Left ventricle myocardium inferior (tissue), 1 donor: ENCODE measurements at regions of chr6 and their contacts with region 1.

Region 1: GRCh38 chr6:138428944-138429598 is 25.0 kb downstream of the HEBP2 start:
- DNase-seq: no peak
- H3K4me3 ChIP-seq: peak overlapping the region; percentile 47
- H3K27ac ChIP-seq: peak overlapping the region; percentile 83
- H3K4me1 ChIP-seq: peaks cover 68% of the 10 kb centered on the region
- H3K27me3 ChIP-seq: no peaks in the 10 kb centered on the region
- CTCF ChIP-seq: peak; percentile 73

Region 2: DNA sequence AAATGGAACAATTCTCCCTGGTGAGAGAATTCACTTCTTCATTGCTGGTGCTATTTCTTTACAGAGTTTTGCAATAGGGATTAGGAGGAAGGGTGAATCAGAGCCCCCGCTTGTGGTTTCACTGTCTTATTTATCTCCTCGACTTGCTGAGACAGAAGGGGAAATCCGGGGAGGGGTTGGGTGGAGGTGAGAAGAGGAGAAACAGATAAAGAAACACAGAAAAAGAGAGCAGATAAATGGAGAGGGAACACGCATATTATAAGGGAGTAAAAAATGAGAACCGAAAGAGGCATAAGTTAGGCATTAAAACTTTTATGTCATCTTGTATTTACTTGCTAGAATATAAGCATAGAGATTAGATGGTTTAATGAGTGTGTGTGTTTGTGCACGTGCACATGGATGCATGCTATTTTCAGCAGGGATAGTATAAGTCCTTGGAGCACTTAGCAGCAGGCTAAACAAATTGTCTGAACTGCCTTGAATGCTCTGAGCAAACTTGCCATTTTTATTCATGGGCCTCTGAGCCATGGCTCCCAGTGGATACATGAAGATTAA is 1039.8 kb before region 1 on chr6:
- intact Hi-C with region 1: no loop called
- DNase-seq: no peak
- H3K4me3 ChIP-seq: no peak overlapping the region
- H3K27ac ChIP-seq: no peak overlapping the region
- H3K4me1 ChIP-seq: no peaks in the 10 kb centered on the region
- H3K27me3 ChIP-seq: peaks cover 12% of the 10 kb centered on the region
- CTCF ChIP-seq: no peak

Region 3: DNA sequence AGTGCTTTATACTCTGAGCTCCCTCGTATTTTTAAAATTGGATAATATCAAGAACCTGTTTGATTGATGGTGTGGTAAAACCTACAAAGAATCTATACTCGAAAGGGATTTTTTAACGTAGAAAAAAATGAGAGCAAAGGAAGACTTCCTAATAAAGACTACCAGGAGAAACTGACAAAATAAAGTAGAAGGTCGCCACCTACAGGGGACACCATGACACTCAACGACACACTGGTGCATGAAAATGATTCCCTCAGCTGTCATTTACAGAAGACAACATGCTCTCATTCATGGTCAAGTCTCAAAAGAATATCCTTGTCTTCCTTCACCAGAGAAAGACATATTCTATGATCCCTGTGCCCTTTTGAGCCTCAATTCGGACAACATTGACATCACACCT is 80.3 kb after region 1 on chr6:
- intact Hi-C with region 1: loop called (anchors 10 kb)
- DNase-seq: peak; percentile 28
- H3K4me3 ChIP-seq: no peak overlapping the region
- H3K27ac ChIP-seq: no peak overlapping the region
- H3K4me1 ChIP-seq: peaks cover 77% of the 10 kb centered on the region
- H3K27me3 ChIP-seq: no peaks in the 10 kb centered on the region
- CTCF ChIP-seq: peak; percentile 70

Region 4: GRCh38 chr6:138588805-138589434 is 159.8 kb after region 1 on chr6:
- intact Hi-C with region 1: loop called (anchors 5 kb)
- DNase-seq: peak; percentile 38
- H3K4me3 ChIP-seq: no peak overlapping the region
- H3K27ac ChIP-seq: no peak overlapping the region
- H3K4me1 ChIP-seq: peaks cover 21% of the 10 kb centered on the region
- H3K27me3 ChIP-seq: no peaks in the 10 kb centered on the region
- CTCF ChIP-seq: peak; percentile 95

Region 5: GRCh38 chr6:138682704-138683527 is 253.8 kb after region 1 on chr6:
- intact Hi-C with region 1: no loop called
- DNase-seq: no peak
- H3K4me3 ChIP-seq: no peak overlapping the region
- H3K27ac ChIP-seq: peak overlapping the region; percentile 22
- H3K4me1 ChIP-seq: no peaks in the 10 kb centered on the region
- H3K27me3 ChIP-seq: no peaks in the 10 kb centered on the region
- CTCF ChIP-seq: no peak